GM12878 (cell line): ENCODE measurements at regions of chr6 and their contacts with region 1.

Region 1: GRCh38 chr6:116847227-116847626 is 18.3 kb upstream of the GPRC6A start:
- DNase-seq: no peak
- ATAC-seq: peak; percentile 75
- H3K4me3 ChIP-seq: no peak overlapping the region
- H3K27ac ChIP-seq: no peak overlapping the region
- H3K4me1 ChIP-seq: no peaks in the 10 kb centered on the region
- H3K27me3 ChIP-seq: no peaks in the 10 kb centered on the region
- CTCF ChIP-seq: peak in 2 of 3 experiments; percentile 10 to 42; a peak in 3 of 6 replicates
- EP300 ChIP-seq: no peak
- POLR2A ChIP-seq: no peak
- RAD21 ChIP-seq: peak; percentile 42

Region 2: GRCh38 chr6:115899730-115900282 is 947.4 kb before region 1 on chr6:
- CTCF ChIA-PET with region 1: no interaction called
- POLR2A ChIA-PET with region 1: no interaction called
- RAD21 ChIA-PET with region 1: no interaction called
- SMC1A ChIA-PET with region 1: no interaction called
- in situ Hi-C with region 1: no loop called
- intact Hi-C with region 1: no loop called
- DNase-seq: no peak
- ATAC-seq: peak; percentile 72
- H3K4me3 ChIP-seq: no peak overlapping the region
- H3K27ac ChIP-seq: no peak overlapping the region
- H3K4me1 ChIP-seq: no peaks in the 10 kb centered on the region
- H3K27me3 ChIP-seq: no peaks in the 10 kb centered on the region
- CTCF ChIP-seq: no peak
- EP300 ChIP-seq: no peak
- POLR2A ChIP-seq: no peak
- RAD21 ChIP-seq: no peak

Region 3: GRCh38 chr6:116779573-116780164 is 67.6 kb before region 1 on chr6:
- CTCF ChIA-PET with region 1: interaction called, 36 read pairs
- POLR2A ChIA-PET with region 1: no interaction called
- RAD21 ChIA-PET with region 1: no interaction called
- SMC1A ChIA-PET with region 1: interaction called, 3 read pairs
- in situ Hi-C with region 1: no loop called
- intact Hi-C with region 1: loop called (anchors 1 kb)
- DNase-seq: no peak
- ATAC-seq: peak; percentile 82
- H3K4me3 ChIP-seq: no peak overlapping the region
- H3K27ac ChIP-seq: no peak overlapping the region
- H3K4me1 ChIP-seq: no peaks in the 10 kb centered on the region
- H3K27me3 ChIP-seq: no peaks in the 10 kb centered on the region
- CTCF ChIP-seq: peak; percentile 23 to 56 (median 37); a peak in 3 of 6 replicates
- EP300 ChIP-seq: no peak
- POLR2A ChIP-seq: no peak
- RAD21 ChIP-seq: peak; percentile 40; the same call in 1 of the 2 replicates

Region 4: GRCh38 chr6:116990679-116991078 is 143.5 kb after region 1 on chr6:
- CTCF ChIA-PET with region 1: no interaction called
- POLR2A ChIA-PET with region 1: no interaction called
- RAD21 ChIA-PET with region 1: no interaction called
- SMC1A ChIA-PET with region 1: no interaction called
- in situ Hi-C with region 1: no loop called
- intact Hi-C with region 1: no loop called
- DNase-seq: no peak
- ATAC-seq: no peak
- H3K4me3 ChIP-seq: no peak overlapping the region
- H3K27ac ChIP-seq: no peak overlapping the region
- H3K4me1 ChIP-seq: no peaks in the 10 kb centered on the region
- H3K27me3 ChIP-seq: no peaks in the 10 kb centered on the region
- CTCF ChIP-seq: no peak
- EP300 ChIP-seq: no peak
- POLR2A ChIP-seq: no peak
- RAD21 ChIP-seq: no peak